Activated naive CD4-positive, alpha-beta T cell treated with anti-CD3 and anti-CD28 coated beads for 36 hours (primary cell): ENCODE measurements at regions of chr22 and their contacts with region 1.

Region 1: GRCh38 chr22:23857606-23858483 is at the start of gene SLC2A11:
- DNase-seq: peak; percentile 95
- H3K4me3 Mint-ChIP-seq: peak within 1 kb of the TSS; percentile 92
- H3K27ac Mint-ChIP-seq: peak within 1 kb of the TSS; percentile 65
- H3K4me1 Mint-ChIP-seq: peaks cover 15% of the 10 kb centered on the region
- H3K27me3 Mint-ChIP-seq: no peaks in the 10 kb centered on the region
- total RNA-seq, gene SLC2A11: 6.1 to 7.5 TPM

Region 2: DNA sequence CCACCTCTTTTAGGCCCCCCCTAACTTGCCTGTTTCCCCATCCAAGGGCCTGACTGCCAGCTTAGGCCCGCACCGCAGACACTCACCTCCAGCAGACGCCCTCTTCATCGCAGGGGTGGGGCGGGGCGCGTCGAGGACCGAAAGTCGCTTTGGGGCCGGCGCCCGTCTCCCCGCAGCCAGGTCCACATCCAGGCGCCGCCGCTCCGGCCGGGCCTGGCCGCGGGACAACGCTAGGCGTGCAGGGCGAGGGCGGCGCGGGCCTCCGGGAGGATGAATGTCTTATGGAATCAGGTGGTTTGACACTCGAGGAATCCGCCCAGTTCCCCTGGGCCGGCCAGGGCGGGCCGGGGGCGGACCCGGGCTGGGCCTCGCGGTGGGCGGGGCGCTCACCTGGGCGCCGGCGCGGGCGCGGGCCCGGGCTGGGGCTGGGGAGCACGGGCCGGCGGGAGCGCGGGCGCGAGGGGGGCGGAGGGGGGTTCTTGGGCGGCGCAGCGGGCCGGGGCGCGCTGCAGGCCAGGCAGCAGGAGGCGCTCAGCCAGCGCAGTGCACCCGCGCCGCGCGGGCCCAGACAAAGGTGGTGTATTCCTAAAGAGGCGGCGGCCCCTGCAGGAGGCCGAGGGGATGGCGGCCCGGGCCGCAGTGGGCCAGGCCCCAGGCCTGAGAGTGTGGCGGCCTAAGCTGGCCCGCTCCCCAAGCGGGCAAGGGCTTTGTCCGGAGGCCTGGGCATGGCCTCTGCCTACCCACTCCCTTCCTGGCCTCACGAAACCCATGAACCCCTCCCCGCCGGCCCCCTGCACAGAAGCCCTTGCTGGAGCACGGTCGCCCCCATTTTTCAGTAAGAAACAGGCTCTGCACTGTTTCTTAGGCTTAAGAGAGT is 455.3 kb before region 1 on chr22:
- CTCF ChIA-PET with region 1: no interaction called
- intact Hi-C with region 1: loop called (anchors 10 kb)
- DNase-seq: peak; percentile 69
- H3K4me3 Mint-ChIP-seq: no peak overlapping the region
- H3K27ac Mint-ChIP-seq: no peak overlapping the region
- H3K4me1 Mint-ChIP-seq: no peaks in the 10 kb centered on the region
- H3K27me3 Mint-ChIP-seq: no peaks in the 10 kb centered on the region

Region 3: DNA sequence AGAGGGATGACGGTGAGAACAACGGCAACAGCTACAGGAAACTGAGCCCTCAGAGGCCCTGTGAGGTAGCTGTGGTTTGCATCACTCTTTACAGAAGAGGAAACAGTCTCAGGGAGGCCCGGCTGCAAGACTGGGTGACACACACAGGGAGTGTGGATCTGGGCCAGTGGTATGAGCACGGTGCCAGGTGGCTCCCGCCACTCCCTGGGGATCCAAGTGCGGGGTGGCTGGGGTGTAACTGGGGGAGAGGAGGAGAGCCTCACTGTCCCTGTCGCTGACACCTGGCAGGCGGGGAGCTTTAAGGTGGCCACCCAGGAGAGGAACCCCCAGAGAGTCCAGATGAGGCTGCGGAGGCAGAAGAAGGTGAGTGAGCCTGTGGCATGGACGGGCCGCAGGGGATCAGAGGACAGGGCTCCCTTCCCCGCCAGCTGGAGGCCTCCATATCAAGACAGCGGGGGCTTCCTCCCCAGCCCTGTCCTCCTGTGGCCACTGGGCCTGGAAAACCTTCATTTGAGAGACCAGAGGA is 161.5 kb before region 1 on chr22:
- CTCF ChIA-PET with region 1: no interaction called
- intact Hi-C with region 1: loop called (anchors 5 kb)
- DNase-seq: peak; percentile 94
- H3K4me3 Mint-ChIP-seq: peak overlapping the region; percentile 93
- H3K27ac Mint-ChIP-seq: peak overlapping the region; percentile 100
- H3K4me1 Mint-ChIP-seq: peaks cover 46% of the 10 kb centered on the region
- H3K27me3 Mint-ChIP-seq: no peaks in the 10 kb centered on the region

Region 4: GRCh38 chr22:23878219-23878618 is 20.4 kb after region 1 on chr22:
- CTCF ChIA-PET with region 1: no interaction called
- intact Hi-C with region 1: no loop called
- DNase-seq: no peak
- H3K4me3 Mint-ChIP-seq: no peak overlapping the region
- H3K27ac Mint-ChIP-seq: no peak overlapping the region
- H3K4me1 Mint-ChIP-seq: no peaks in the 10 kb centered on the region
- H3K27me3 Mint-ChIP-seq: no peaks in the 10 kb centered on the region

Region 5: GRCh38 chr22:23893943-23894709 is 36.3 kb after region 1 on chr22 and contains the start of gene MIF:
- CTCF ChIA-PET with region 1: interaction called, 31 read pairs
- intact Hi-C with region 1: loop called (anchors 5 kb)
- DNase-seq: peak; percentile 96
- H3K4me3 Mint-ChIP-seq: peak within 1 kb of the TSS; percentile 95
- H3K27ac Mint-ChIP-seq: peak within 1 kb of the TSS; percentile 97
- H3K4me1 Mint-ChIP-seq: peaks cover 19% of the 10 kb centered on the region
- H3K27me3 Mint-ChIP-seq: no peaks in the 10 kb centered on the region
- total RNA-seq, gene MIF: 1,489 to 1,512 TPM

Region 6: DNA sequence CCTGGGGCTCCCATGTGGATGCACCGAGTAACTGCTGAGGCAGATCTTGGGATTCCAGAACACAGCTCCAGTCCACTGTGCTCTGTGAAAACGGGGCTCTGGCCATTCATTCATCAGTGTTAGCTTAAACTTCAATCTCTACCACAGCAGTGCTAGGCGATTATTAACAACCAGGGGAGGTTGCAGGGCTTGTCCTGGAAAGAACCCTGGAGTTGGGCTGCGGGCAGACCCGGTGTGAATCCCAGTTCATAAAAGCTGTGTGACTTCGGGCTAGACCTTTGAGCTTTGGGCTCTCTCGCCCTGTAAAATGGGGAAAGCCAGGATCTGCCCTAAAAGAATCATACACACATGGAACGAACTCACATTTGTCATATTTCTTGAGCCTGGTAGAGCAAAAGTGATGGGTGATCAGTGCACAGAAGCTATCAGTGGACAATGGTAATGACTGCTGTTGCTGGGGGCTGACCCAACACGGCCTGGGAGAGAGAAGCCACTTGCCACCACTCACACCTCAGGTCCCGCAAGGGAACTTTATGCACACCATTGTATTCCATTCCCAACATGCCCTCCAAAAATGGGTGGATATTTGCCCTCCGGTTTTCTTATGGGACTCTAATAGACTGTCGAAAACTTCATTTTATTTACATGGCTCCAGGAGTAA is 1326.2 kb after region 1 on chr22:
- CTCF ChIA-PET with region 1: no interaction called
- intact Hi-C with region 1: no loop called
- DNase-seq: no peak
- H3K4me3 Mint-ChIP-seq: no peak overlapping the region
- H3K27ac Mint-ChIP-seq: no peak overlapping the region
- H3K4me1 Mint-ChIP-seq: no peaks in the 10 kb centered on the region
- H3K27me3 Mint-ChIP-seq: no peaks in the 10 kb centered on the region